ENCODE measurements at regions of chr9 and their contacts with region 1.

Region 1: DNA sequence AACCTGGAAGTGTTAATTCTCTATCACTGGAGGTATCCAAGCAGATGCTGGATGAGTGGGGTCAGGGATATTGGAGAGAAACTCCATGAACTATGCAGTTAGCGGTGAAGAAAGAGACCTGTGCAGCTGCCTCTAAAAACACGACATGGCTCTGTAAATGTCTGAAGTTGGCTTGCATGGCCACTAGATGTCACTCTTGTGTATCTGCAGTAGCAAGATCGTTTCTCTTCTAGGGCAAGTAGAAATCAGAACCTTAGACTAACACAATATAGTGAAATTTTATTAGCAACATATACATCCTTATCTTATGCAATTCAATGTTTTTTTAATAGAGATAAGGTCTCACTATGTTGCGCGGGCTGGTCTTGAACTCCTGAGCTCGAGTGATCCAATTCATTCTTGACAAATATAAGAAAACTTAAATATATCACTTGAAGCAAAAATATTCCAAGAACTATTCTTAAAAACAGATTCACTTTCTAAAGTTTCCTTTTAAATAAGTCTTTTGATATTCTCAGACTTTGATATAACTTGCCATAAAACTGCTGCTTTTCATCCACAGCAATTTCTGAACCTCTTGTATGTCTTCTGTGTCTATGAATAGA is 2.9 kb downstream of the OR2S2 start:
- DNase-seq: peak in 7 of 9 donors; percentile 47 to 74 (median 66)
- ATAC-seq: peak; percentile 90
- H3K4me3 ChIP-seq: no peak overlapping the region
- H3K4me3 Mint-ChIP-seq: peak overlapping the region in 1 of 10 donors; percentile 29
- H3K27ac ChIP-seq: no peak overlapping the region
- H3K27ac Mint-ChIP-seq: peak overlapping the region in 1 of 9 donors; percentile 13
- H3K4me1 ChIP-seq: no peaks in the 10 kb centered on the region
- H3K4me1 Mint-ChIP-seq: peaks cover 0 to 18% (median 8%) of the 10 kb centered on the region in 7 donors
- H3K27me3 ChIP-seq: no peaks in the 10 kb centered on the region
- H3K27me3 Mint-ChIP-seq: peaks cover 0 to 25% (median 0%) of the 10 kb centered on the region in 5 donors

Region 2: DNA sequence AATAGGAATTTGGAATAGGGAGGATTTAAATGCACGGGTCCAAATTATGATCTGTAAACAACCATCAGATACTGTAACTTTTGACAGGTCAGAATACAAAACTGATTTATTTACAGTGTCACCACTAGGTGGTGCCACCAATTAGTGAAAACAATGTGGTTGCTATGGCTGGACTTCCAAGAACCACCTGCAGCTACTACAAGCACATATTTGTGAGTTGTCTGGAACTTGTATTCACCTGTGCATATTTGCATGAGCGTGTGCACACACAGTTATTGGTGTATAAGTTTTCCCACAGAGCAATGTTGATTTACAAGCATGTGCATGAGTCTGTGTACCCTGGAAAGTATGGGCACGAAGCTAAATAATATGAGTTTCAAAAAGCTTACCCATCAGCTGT is 52.0 kb before region 1 on chr9:
- CTCF ChIA-PET with region 1: interaction called, 5 read pairs
- POLR2A ChIA-PET with region 1: no interaction called
- intact Hi-C with region 1: loop called in 1 of 2 experiments (anchors 2 kb)
- DNase-seq: peak in 7 of 9 donors; percentile 41 to 69 (median 63)
- ATAC-seq: peak; percentile 88
- H3K4me3 ChIP-seq: no peak overlapping the region
- H3K4me3 Mint-ChIP-seq: no peak overlapping the region
- H3K27ac ChIP-seq: no peak overlapping the region
- H3K27ac Mint-ChIP-seq: peak overlapping the region in 1 of 9 donors; percentile 67
- H3K4me1 ChIP-seq: peaks cover 3 to 31% of the 10 kb centered on the region in 2 donors
- H3K4me1 Mint-ChIP-seq: peaks cover 8 to 45% (median 28%) of the 10 kb centered on the region in 7 donors
- H3K27me3 ChIP-seq: peaks cover 0 to 3% of the 10 kb centered on the region in 2 donors
- H3K27me3 Mint-ChIP-seq: peaks cover 0 to 23% (median 0%) of the 10 kb centered on the region in 5 donors

Measured in naive thymus-derived CD4-positive, alpha-beta T cell (primary cell).